ENCODE measurements at regions of chr1 and their contacts with region 1.

Region 1: GRCh38 chr1:55277377-55278130 is 62.4 kb upstream of the USP24 start:
- DNase-seq: peak; percentile 89
- ATAC-seq: peak; percentile 89
- H3K4me3 ChIP-seq: peak overlapping the region in 3 of 5 experiments; percentile 13 to 45 (median 16)
- H3K4me3 Mint-ChIP-seq: peak overlapping the region; percentile 81
- H3K27ac ChIP-seq: no peak overlapping the region
- H3K27ac Mint-ChIP-seq: peak overlapping the region; percentile 77
- H3K4me1 ChIP-seq: peaks cover 16 to 17% of the 10 kb centered on the region in 2 donors
- H3K4me1 Mint-ChIP-seq: peaks cover 22% of the 10 kb centered on the region
- H3K27me3 ChIP-seq: no peaks in the 10 kb centered on the region
- H3K27me3 Mint-ChIP-seq: peaks cover 4% of the 10 kb centered on the region
- CTCF ChIP-seq: peak; percentile 87

Region 2: GRCh38 chr1:54927472-54928240 is 349.9 kb before region 1 on chr1:
- CTCF ChIA-PET with region 1: no interaction called
- POLR2A ChIA-PET with region 1: no interaction called
- intact Hi-C with region 1: no loop called
- DNase-seq: no peak
- ATAC-seq: no peak
- H3K4me3 ChIP-seq: no peak overlapping the region
- H3K4me3 Mint-ChIP-seq: no peak overlapping the region
- H3K27ac ChIP-seq: no peak overlapping the region
- H3K27ac Mint-ChIP-seq: no peak overlapping the region
- H3K4me1 ChIP-seq: no peaks in the 10 kb centered on the region
- H3K4me1 Mint-ChIP-seq: no peaks in the 10 kb centered on the region
- H3K27me3 ChIP-seq: peaks cover 0 to 5% (median 0%) of the 10 kb centered on the region in 4 experiments
- H3K27me3 Mint-ChIP-seq: peaks cover 23% of the 10 kb centered on the region
- CTCF ChIP-seq: no peak

Region 3: DNA sequence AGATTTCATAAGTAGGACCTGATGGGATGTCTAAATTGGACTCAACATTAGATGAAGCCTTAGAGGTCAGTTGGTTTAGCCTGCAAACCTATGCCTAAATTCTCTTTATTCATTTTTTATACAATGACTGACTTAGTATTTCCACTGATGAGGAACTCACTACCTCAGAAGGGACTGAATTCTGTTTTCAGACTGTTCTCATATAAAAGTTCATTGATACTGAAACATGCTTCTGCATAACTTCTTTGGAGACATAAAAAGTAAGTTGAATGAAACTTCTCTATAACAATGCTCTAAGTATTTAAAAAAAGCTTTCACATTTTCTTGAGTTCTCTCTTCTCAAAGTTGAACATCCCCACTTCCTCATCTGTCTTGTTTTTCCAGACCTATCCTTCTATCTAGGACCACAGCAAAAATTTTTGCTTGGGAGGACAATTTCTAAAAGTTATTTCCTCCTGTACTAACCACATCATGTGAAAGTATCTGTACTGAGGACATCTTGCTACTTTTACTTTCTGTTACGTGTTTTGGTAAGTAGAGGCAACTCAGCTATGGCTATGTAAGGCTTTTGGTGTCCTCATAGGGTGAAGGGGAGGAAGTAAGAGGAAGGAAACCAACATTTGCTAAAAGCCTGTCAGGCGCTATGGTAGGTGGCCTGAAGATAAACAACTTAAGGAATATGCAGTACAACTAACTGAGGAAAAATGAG is 126.5 kb before region 1 on chr1:
- CTCF ChIA-PET with region 1: interaction called, 33 read pairs
- POLR2A ChIA-PET with region 1: no interaction called
- intact Hi-C with region 1: no loop called
- DNase-seq: peak; percentile 48
- ATAC-seq: peak; percentile 53
- H3K4me3 ChIP-seq: peak overlapping the region in 2 of 5 experiments; percentile 2 to 16
- H3K4me3 Mint-ChIP-seq: peak overlapping the region; percentile 24
- H3K27ac ChIP-seq: peak overlapping the region; percentile 58 to 86
- H3K27ac Mint-ChIP-seq: peak overlapping the region; percentile 62
- H3K4me1 ChIP-seq: peaks cover 14% of the 10 kb centered on the region in 2 donors
- H3K4me1 Mint-ChIP-seq: peaks cover 17% of the 10 kb centered on the region
- H3K27me3 ChIP-seq: no peaks in the 10 kb centered on the region
- H3K27me3 Mint-ChIP-seq: no peaks in the 10 kb centered on the region
- CTCF ChIP-seq: no peak

Region 4: GRCh38 chr1:55172272-55172671 is 105.3 kb before region 1 on chr1:
- CTCF ChIA-PET with region 1: interaction called, 26 read pairs
- POLR2A ChIA-PET with region 1: no interaction called
- intact Hi-C with region 1: no loop called
- DNase-seq: no peak
- ATAC-seq: no peak
- H3K4me3 ChIP-seq: no peak overlapping the region
- H3K4me3 Mint-ChIP-seq: no peak overlapping the region
- H3K27ac ChIP-seq: no peak overlapping the region
- H3K27ac Mint-ChIP-seq: no peak overlapping the region
- H3K4me1 ChIP-seq: no peaks in the 10 kb centered on the region
- H3K4me1 Mint-ChIP-seq: peaks cover 3% of the 10 kb centered on the region
- H3K27me3 ChIP-seq: no peaks in the 10 kb centered on the region
- H3K27me3 Mint-ChIP-seq: no peaks in the 10 kb centered on the region
- CTCF ChIP-seq: no peak

Region 5: GRCh38 chr1:55204997-55205396 is 72.6 kb before region 1 on chr1:
- CTCF ChIA-PET with region 1: interaction called, 111 read pairs
- POLR2A ChIA-PET with region 1: interaction called, 5 read pairs
- intact Hi-C with region 1: no loop called
- DNase-seq: no peak
- ATAC-seq: no peak
- H3K4me3 ChIP-seq: no peak overlapping the region
- H3K4me3 Mint-ChIP-seq: no peak overlapping the region
- H3K27ac ChIP-seq: peak overlapping the region in 1 of 2 donors; percentile 17
- H3K27ac Mint-ChIP-seq: no peak overlapping the region
- H3K4me1 ChIP-seq: peaks cover 11 to 26% of the 10 kb centered on the region in 2 donors
- H3K4me1 Mint-ChIP-seq: peaks cover 60% of the 10 kb centered on the region
- H3K27me3 ChIP-seq: no peaks in the 10 kb centered on the region
- H3K27me3 Mint-ChIP-seq: no peaks in the 10 kb centered on the region
- CTCF ChIP-seq: no peak

Region 6: DNA sequence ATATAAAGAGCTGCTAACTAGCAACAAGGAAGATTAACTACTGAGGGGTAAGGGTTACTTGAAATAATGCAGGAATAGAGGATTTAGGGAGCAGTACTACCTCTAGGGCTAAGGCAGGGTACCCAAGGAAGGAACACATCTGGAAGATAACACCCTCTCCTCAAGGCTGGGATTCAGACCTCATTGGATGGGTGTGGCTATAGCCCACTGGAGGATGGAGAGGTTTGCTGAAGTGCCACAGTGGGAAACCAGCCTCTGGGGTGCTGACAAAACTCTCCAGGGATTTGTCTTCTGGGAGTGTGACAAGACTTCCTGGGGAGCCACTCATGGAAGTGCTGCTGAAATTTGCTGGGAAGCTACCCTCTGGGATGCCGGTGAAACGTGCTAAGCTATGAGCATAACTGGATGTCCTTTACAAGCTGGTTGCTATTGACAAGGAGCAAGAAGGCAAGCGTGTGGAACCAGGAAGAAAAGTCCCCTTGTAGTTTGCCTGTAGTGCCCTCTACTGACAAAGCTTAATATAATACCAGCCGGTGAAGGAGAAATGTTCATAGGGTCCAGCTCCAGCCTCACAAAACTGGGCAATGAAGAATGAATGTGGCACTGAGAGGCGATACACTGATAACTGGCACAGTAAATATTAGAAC is 60.4 kb after region 1 on chr1:
- CTCF ChIA-PET with region 1: interaction called, 17 read pairs
- POLR2A ChIA-PET with region 1: no interaction called
- intact Hi-C with region 1: no loop called
- DNase-seq: peak; percentile 34
- ATAC-seq: no peak
- H3K4me3 ChIP-seq: no peak overlapping the region
- H3K4me3 Mint-ChIP-seq: no peak overlapping the region
- H3K27ac ChIP-seq: no peak overlapping the region
- H3K27ac Mint-ChIP-seq: no peak overlapping the region
- H3K4me1 ChIP-seq: no peaks in the 10 kb centered on the region
- H3K4me1 Mint-ChIP-seq: peaks cover 3% of the 10 kb centered on the region
- H3K27me3 ChIP-seq: no peaks in the 10 kb centered on the region
- H3K27me3 Mint-ChIP-seq: peaks cover 11% of the 10 kb centered on the region
- CTCF ChIP-seq: peak; percentile 40